CD8-positive, alpha-beta memory T cell (primary cell): ENCODE measurements at regions of chr1 and their contacts with region 1.

Region 1: DNA sequence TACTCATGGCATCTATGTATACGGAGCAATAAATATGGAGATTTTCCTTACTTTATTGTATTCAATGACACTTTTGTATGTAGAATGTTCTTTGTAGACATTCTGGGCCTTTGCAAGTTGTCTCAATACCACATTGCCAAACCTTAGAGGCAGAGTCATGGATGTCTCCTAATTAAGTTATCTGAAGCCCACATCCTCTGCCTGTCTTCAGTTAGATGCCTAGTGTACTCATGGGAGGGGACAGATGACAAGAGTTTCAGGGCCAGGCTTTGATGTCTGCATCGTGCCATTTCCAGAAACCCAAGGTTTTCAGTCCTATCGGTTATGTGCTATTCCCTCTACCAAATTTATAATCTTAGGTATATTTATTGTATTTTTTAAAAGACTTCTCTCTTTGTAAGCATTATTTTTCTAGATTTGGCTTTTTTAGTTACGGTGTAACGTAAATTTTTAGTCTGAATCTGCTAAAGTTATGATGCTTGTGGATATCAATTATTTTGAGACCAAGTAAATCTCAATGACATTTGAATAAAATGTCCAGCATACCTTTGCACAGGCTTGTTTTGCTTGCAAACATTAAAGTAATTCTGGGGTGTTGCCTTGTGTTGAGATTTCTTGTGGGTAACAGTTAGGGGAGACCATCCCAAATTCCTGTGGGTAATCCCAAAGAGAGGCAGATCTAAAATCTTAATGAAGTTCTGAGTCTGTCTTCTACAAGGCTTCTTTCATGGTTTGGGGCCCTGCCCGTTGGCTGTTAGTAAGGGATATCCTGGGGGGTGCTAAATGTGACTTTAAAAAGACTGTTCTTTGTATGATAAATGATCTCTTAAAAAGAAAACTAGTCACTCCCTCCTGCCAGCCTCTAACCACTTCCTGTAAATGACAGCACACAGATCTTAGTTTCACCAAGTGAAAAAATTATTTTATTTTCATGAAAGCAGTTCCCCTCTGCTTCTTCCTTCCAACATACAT is 8.0 kb upstream of the MACF1 start:
- DNase-seq: peak; percentile 32 to 86 (median 79)
- H3K4me3 ChIP-seq: peak overlapping the region; percentile 44
- H3K4me3 Mint-ChIP-seq: peak overlapping the region; percentile 38 to 83 (median 71)
- H3K27ac ChIP-seq: peak overlapping the region; percentile 60
- H3K27ac Mint-ChIP-seq: peak overlapping the region; percentile 39 to 97 (median 90)
- H3K4me1 ChIP-seq: peaks cover 67% of the 10 kb centered on the region
- H3K4me1 Mint-ChIP-seq: peaks cover 72 to 81% (median 78%) of the 10 kb centered on the region in 3 donors
- H3K27me3 ChIP-seq: no peaks in the 10 kb centered on the region
- H3K27me3 Mint-ChIP-seq: no peaks in the 10 kb centered on the region

Region 2: DNA sequence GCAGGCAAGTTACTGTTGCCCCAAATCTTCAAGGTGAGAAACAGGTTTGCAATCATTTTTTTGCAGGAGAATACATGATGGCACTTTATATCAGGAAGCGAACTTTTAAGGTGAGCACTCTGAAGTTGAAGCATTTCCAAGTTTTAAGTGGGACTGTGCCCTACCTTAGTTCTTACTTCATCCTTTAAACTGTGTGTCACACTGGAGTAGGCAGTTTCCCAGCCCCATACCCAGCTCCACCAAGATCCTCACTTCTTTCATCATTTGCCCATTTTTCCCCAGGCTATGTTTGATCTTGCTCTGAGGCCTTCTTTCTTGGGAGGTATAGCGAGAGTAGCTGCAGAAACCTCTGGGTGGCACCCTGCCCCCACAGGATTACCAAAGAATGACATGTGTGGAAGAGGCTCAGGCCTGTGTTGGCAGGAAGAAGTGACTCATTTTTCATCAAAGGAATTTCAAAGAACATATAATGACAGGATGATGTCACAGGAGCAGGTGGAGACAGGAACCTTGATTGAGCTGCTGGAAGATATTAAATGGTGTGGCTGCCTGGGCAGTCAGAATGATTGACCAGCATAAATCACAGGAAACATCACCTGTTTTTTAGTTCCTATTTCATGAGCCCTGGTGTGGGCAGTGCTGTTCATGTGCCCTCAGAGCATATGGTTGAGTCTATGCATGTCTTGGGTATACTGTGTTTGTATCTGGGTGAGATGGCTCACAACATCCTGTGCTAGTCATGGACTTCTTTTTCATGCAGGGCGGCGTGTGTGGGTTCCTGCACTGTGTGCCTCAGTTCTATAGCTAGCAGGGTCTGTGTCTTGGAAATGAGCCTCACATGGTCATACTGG is 12.8 kb before region 1 on chr1:
- CTCF ChIA-PET with region 1: interaction called, 32 read pairs
- POLR2A ChIA-PET with region 1: interaction called, 3 read pairs
- DNase-seq: peak; percentile 68 to 90 (median 83)
- H3K4me3 ChIP-seq: no peak overlapping the region
- H3K4me3 Mint-ChIP-seq: peak overlapping the region in 3 of 7 donors; percentile 0 to 30 (median 2)
- H3K27ac ChIP-seq: peak overlapping the region; percentile 4
- H3K27ac Mint-ChIP-seq: peak overlapping the region; percentile 84 to 96 (median 92)
- H3K4me1 ChIP-seq: peaks cover 20% of the 10 kb centered on the region
- H3K4me1 Mint-ChIP-seq: peaks cover 24 to 39% (median 34%) of the 10 kb centered on the region in 3 donors
- H3K27me3 ChIP-seq: no peaks in the 10 kb centered on the region
- H3K27me3 Mint-ChIP-seq: peaks cover 0 to 2% of the 10 kb centered on the region in 2 donors

Region 3: DNA sequence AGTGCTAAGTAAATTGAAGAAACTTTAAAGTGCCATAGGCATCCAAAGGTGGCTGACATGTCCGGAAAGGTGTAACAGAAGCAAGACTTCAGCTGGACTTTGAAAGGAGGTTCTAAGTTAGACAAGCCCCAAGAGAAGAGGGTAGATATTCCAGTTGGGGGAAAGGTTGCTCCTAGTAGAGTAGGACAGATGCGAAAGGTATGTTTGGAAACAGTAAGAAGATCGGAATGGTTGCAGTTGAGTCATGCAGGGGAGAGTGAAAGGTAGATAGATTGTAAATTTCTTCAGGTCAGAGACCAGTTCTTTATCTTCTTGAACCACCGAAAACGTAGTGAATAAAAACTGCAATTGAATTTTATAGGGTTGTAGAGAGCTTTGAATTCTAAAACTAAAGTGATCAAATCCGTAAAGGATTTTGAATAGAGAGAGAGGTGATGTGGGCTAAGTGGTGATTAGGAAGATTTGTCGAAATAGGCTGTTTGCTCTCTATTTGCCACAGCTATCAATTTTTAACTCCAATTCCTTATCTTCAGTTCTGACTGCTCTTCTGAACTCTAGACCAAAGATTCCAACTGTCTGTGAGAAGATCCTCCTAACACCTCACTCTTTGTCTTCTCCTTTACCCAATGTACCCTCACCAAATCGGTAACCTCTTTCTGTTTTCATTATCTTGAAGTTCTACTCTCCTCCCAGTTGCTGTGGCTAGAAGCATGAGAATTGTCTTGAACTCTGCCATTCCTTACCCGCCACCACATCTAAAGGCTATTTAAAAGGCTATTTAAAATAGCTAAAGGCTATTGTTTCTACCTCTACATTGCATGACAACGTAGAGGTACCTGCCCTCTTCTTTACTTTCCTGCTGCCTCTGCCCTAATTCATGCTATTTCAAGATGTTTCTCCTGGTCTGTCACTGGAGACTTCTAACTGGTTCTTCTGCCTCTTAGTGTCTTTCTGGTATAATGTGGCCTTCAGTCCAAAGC is 24.7 kb after region 1 on chr1:
- CTCF ChIA-PET with region 1: interaction called, 46 read pairs
- POLR2A ChIA-PET with region 1: interaction called, 12 read pairs
- DNase-seq: no peak
- H3K4me3 ChIP-seq: no peak overlapping the region
- H3K4me3 Mint-ChIP-seq: peak overlapping the region in 6 of 7 donors; percentile 0 to 65 (median 49)
- H3K27ac ChIP-seq: no peak overlapping the region
- H3K27ac Mint-ChIP-seq: peak overlapping the region in 7 of 8 donors; percentile 39 to 76 (median 66)
- H3K4me1 ChIP-seq: peaks cover 71% of the 10 kb centered on the region
- H3K4me1 Mint-ChIP-seq: peaks cover 71 to 87% (median 85%) of the 10 kb centered on the region in 3 donors
- H3K27me3 ChIP-seq: no peaks in the 10 kb centered on the region
- H3K27me3 Mint-ChIP-seq: no peaks in the 10 kb centered on the region

Region 4: DNA sequence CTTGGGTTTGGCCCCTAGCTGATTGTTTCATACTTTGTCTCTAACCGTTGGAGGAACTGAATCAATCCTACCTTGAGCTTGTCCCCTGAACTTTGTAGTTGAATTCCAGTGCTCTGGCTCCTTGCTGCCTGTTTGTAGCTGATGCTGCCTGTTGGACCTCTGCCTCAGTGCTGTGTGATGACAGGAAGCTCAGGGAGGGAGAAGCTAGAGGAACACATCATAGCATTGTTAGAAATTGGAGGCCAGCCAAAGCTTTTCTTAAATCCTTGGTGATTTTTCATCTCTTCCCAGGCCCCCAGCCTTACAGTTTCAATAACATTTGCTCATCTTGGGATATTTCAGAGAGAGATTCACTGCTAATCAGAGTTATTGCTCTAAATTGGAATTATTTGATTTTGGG is 41.9 kb after region 1 on chr1:
- CTCF ChIA-PET with region 1: interaction called, 40 read pairs
- POLR2A ChIA-PET with region 1: interaction called, 5 read pairs
- DNase-seq: no peak
- H3K4me3 ChIP-seq: no peak overlapping the region
- H3K4me3 Mint-ChIP-seq: peak overlapping the region in 1 of 7 donors; percentile 37
- H3K27ac ChIP-seq: no peak overlapping the region
- H3K27ac Mint-ChIP-seq: peak overlapping the region in 7 of 8 donors; percentile 15 to 89 (median 72)
- H3K4me1 ChIP-seq: peaks cover 20% of the 10 kb centered on the region
- H3K4me1 Mint-ChIP-seq: peaks cover 58 to 76% (median 74%) of the 10 kb centered on the region in 3 donors
- H3K27me3 ChIP-seq: no peaks in the 10 kb centered on the region
- H3K27me3 Mint-ChIP-seq: no peaks in the 10 kb centered on the region

Region 5: GRCh38 chr1:39258146-39258924 is 61.8 kb after region 1 on chr1:
- CTCF ChIA-PET with region 1: interaction called, 214 read pairs
- POLR2A ChIA-PET with region 1: interaction called, 20 read pairs
- DNase-seq: peak; percentile 50 to 73 (median 55)
- H3K4me3 ChIP-seq: no peak overlapping the region
- H3K4me3 Mint-ChIP-seq: no peak overlapping the region
- H3K27ac ChIP-seq: no peak overlapping the region
- H3K27ac Mint-ChIP-seq: peak overlapping the region; percentile 63 to 90 (median 82)
- H3K4me1 ChIP-seq: peaks cover 32% of the 10 kb centered on the region
- H3K4me1 Mint-ChIP-seq: peaks cover 32 to 48% (median 38%) of the 10 kb centered on the region in 3 donors
- H3K27me3 ChIP-seq: no peaks in the 10 kb centered on the region
- H3K27me3 Mint-ChIP-seq: no peaks in the 10 kb centered on the region